CD8-positive, alpha-beta T cell (primary cell): ENCODE measurements at regions of chr1 and their contacts with region 1.

Region 1: DNA sequence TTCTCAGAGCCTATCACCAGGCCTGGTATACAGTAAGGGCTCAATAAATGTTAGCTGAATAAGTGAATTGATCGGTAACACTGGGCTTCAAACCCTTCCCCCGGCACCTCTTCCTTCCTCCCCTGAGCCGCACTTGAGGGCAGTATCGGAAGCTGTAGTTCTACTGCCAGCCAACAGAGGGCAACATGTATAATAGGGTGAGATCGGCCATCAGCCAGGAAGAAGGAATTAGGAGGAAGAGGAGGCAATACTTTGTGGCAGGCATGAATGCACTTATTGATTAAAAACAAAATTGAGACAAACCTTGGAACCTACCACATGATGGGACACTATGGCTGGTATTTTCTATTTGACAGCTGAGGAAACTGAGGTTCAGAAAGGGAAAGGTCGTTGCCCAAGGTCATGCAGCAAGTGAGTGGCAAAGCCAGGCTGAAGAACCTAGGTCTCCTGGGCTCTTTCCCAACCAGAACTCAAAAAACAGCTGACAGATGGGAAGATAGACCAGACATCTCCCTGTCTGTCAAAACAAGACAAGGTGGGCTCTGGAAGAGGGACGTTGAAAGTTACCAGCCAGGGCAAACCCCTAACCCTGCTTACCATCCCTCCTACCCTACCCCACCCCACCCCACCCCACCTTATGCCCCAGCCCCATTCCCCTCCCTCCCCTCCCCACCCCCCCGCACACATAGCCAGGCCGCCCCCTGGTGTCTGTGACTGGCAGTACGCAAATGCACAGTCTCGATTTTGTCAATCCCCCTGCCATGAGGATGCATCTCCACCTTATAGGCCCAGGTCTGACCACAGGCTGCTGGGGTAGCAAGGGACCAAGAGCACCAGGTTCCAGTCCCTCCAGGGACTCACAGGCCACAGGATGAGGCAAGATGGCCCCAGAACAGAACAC is 107.3 kb upstream of the RUNX3 start:
- DNase-seq: peak in 8 of 9 experiments; percentile 59 to 80 (median 70)
- ATAC-seq: peak; percentile 47
- H3K4me3 ChIP-seq: no peak overlapping the region
- H3K4me3 Mint-ChIP-seq: peak overlapping the region; percentile 5
- H3K27ac ChIP-seq: no peak overlapping the region
- H3K27ac Mint-ChIP-seq: no peak overlapping the region
- H3K4me1 ChIP-seq: peaks cover 65% of the 10 kb centered on the region
- H3K4me1 Mint-ChIP-seq: peaks cover 52% of the 10 kb centered on the region
- H3K27me3 ChIP-seq: no peaks in the 10 kb centered on the region
- H3K27me3 Mint-ChIP-seq: no peaks in the 10 kb centered on the region
- CTCF ChIP-seq: peak; percentile 72

Region 2: DNA sequence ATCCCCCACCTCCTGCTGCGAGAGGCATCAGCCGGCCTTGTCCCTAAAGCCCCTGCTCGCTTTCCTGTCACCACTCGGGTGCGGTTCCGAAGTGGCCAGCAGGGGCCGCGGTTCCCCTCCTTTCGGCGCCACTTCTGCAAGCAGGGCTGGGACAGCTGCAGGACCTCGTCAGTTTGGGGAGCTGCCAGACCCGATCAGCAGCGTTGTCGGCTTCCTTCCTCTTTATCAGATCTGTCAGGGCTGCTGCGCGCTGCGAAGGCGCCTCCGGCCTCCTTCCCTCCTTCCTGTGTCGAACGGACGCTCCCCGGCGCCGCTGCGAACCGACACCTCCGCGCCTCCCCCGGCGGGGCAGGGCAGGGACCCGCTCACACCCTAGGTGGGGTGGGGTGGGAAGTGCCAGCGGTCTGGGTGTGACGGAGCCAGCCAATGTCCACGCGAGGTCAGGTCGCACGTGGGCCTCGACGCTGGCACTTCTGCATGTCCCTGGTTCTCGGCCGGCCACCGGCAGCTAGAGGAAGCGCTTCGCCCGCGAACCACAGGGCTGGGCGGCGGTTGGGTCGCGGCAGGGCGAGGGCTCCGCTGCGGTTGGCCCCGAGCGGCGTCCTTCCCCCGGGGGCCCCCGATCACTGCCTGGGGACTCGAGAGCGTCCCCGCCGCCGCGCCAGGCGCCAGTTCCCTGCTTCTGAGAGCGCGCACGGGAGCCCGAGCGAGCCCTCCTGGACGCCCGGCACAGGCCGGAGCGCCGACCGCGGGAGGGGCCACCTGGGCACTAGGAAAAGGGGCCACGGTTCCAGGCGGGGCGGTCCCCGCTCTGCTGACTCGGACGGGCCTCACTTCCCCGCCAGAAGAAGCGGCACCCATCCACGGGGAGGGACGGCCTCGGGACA is 189.2 kb before region 1 on chr1:
- CTCF ChIA-PET with region 1: interaction called, 33 read pairs
- POLR2A ChIA-PET with region 1: interaction called, 5 read pairs
- intact Hi-C with region 1: loop called (anchors 1 kb)
- DNase-seq: peak; percentile 82 to 96 (median 91)
- ATAC-seq: peak; percentile 92
- H3K4me3 ChIP-seq: peak overlapping the region; percentile 44 to 58
- H3K4me3 Mint-ChIP-seq: peak overlapping the region; percentile 63
- H3K27ac ChIP-seq: peak overlapping the region; percentile 11 to 63
- H3K27ac Mint-ChIP-seq: peak overlapping the region; percentile 79
- H3K4me1 ChIP-seq: peaks cover 19% of the 10 kb centered on the region
- H3K4me1 Mint-ChIP-seq: peaks cover 16% of the 10 kb centered on the region
- H3K27me3 ChIP-seq: no peaks in the 10 kb centered on the region
- H3K27me3 Mint-ChIP-seq: no peaks in the 10 kb centered on the region
- CTCF ChIP-seq: peak; percentile 84

Region 3: GRCh38 chr1:24935615-24936484 is 101.6 kb before region 1 on chr1:
- CTCF ChIA-PET with region 1: interaction called, 67 read pairs
- POLR2A ChIA-PET with region 1: interaction called, 15 read pairs
- intact Hi-C with region 1: loop called (anchors 1 kb)
- DNase-seq: no peak
- ATAC-seq: no peak
- H3K4me3 ChIP-seq: no peak overlapping the region
- H3K4me3 Mint-ChIP-seq: no peak overlapping the region
- H3K27ac ChIP-seq: no peak overlapping the region
- H3K27ac Mint-ChIP-seq: peak overlapping the region; percentile 35
- H3K4me1 ChIP-seq: peaks cover 20% of the 10 kb centered on the region
- H3K4me1 Mint-ChIP-seq: peaks cover 36% of the 10 kb centered on the region
- H3K27me3 ChIP-seq: no peaks in the 10 kb centered on the region
- H3K27me3 Mint-ChIP-seq: no peaks in the 10 kb centered on the region
- CTCF ChIP-seq: no peak

Region 4: DNA sequence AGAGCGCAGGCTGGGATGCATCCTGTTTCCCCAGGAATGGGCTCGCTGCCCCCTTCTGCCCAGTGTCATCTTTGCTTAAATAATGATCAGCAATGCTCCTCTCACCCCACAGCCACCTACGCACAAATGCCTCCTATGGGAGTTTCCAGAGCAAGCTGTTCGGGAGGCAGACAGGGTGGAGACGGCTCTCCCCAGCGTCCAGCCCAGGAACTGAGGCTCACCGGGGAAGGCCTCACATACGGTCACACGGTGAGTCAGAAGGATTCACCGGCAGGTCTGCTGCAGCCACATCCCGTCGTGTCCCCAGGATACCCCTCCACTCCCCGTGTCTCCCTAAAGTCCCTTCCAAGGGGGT is 67.0 kb before region 1 on chr1:
- CTCF ChIA-PET with region 1: interaction called, 163 read pairs
- POLR2A ChIA-PET with region 1: interaction called, 25 read pairs
- intact Hi-C with region 1: loop called in 1 of 2 experiments (anchors 1 kb)
- DNase-seq: peak in 1 of 9 experiments; percentile 11
- ATAC-seq: no peak
- H3K4me3 ChIP-seq: peak overlapping the region in 1 of 2 experiments; percentile 20
- H3K4me3 Mint-ChIP-seq: peak overlapping the region; percentile 35
- H3K27ac ChIP-seq: peak overlapping the region in 1 of 2 experiments; percentile 23
- H3K27ac Mint-ChIP-seq: peak overlapping the region; percentile 95
- H3K4me1 ChIP-seq: peaks cover 66% of the 10 kb centered on the region
- H3K4me1 Mint-ChIP-seq: peaks cover 65% of the 10 kb centered on the region
- H3K27me3 ChIP-seq: peaks cover 0 to 2% of the 10 kb centered on the region in 2 experiments
- H3K27me3 Mint-ChIP-seq: no peaks in the 10 kb centered on the region
- CTCF ChIP-seq: no peak

Region 5: GRCh38 chr1:24996983-24997893 is 40.2 kb before region 1 on chr1:
- CTCF ChIA-PET with region 1: interaction called, 115 read pairs
- POLR2A ChIA-PET with region 1: interaction called, 7 read pairs
- intact Hi-C with region 1: loop called (anchors 1 to 2 kb)
- DNase-seq: peak in 8 of 9 experiments; percentile 34 to 86 (median 74)
- ATAC-seq: peak; percentile 65
- H3K4me3 ChIP-seq: peak overlapping the region in 1 of 2 experiments; percentile 1
- H3K4me3 Mint-ChIP-seq: peak overlapping the region; percentile 54
- H3K27ac ChIP-seq: peak overlapping the region; percentile 14 to 73
- H3K27ac Mint-ChIP-seq: peak overlapping the region; percentile 92
- H3K4me1 ChIP-seq: peaks cover 89% of the 10 kb centered on the region
- H3K4me1 Mint-ChIP-seq: peaks cover 92% of the 10 kb centered on the region
- H3K27me3 ChIP-seq: no peaks in the 10 kb centered on the region
- H3K27me3 Mint-ChIP-seq: no peaks in the 10 kb centered on the region
- CTCF ChIP-seq: no peak

Region 6: DNA sequence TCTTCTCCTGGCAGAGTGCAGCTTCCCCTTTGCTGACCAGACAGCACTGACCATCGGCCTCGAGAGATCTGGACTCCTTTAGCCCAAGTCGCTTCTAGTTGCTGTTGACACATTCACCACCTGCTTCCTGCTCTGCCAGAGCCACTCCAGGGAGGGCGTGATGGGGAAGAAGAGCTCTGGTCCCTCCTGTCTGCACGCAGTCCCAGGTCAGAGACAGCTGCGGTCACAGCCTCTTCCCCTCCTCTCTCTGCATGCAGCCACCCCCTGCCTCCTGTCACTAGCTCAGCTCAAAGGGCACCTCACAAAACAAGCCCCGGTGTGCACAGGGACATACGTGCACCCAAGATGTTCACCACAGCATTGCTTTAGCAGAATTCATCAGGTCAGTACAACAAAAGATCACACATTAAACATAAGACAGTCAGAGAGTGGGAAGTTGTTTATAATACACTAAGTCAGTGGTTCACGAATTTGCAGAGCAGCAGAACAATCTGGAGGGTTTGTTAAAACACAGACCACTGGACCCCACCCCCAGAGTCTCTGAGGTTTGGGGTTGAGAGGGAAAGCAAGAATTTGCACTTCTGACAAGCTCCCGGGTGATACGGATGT is 62.0 kb after region 1 on chr1:
- CTCF ChIA-PET with region 1: interaction called, 86 read pairs
- POLR2A ChIA-PET with region 1: interaction called, 7 read pairs
- intact Hi-C with region 1: loop called (anchors 2 to 5 kb)
- DNase-seq: peak; percentile 8 to 82 (median 52)
- ATAC-seq: peak; percentile 50
- H3K4me3 ChIP-seq: peak overlapping the region; percentile 21 to 32
- H3K4me3 Mint-ChIP-seq: peak overlapping the region; percentile 71
- H3K27ac ChIP-seq: peak overlapping the region; percentile 19 to 60
- H3K27ac Mint-ChIP-seq: peak overlapping the region; percentile 86
- H3K4me1 ChIP-seq: peaks cover 73% of the 10 kb centered on the region
- H3K4me1 Mint-ChIP-seq: peaks cover 74% of the 10 kb centered on the region
- H3K27me3 ChIP-seq: no peaks in the 10 kb centered on the region
- H3K27me3 Mint-ChIP-seq: no peaks in the 10 kb centered on the region
- CTCF ChIP-seq: no peak